Mucosa of descending colon (tissue), 3 donors: ENCODE measurements at regions of chrX and their contacts with region 1.

Region 1: DNA sequence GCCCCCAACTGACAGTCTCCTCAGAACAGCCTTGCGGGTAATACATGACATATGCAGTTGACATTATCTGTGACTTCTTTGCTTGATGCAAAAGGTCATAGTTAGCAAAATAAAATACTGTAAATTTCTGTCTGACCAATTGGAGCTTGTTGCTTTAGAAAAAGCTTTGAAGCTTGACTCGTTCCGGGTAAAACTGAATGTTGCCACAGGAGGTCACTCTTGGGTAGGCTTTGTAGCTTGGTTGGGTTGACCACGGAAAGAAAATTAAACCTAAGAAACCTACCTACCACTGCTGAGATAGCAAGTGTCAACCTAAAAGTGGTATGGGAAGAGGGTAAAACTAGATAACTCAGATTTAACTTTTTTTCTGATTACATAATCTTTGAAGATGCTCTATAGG is 23.2 kb downstream of the PRPS2 start:
- DNase-seq: peak in 1 of 3 donors; percentile 68
- ATAC-seq: peak; percentile 62
- H3K4me3 ChIP-seq: no peak overlapping the region
- H3K4me1 ChIP-seq: no peaks in the 10 kb centered on the region
- CTCF ChIP-seq: no peak

Region 2: GRCh38 chrX:12894074-12895030 is 79.9 kb after region 1 on chrX:
- intact Hi-C with region 1: loop called in 1 of 2 experiments (anchors 10 kb)
- DNase-seq: peak in 2 of 3 donors; percentile 53 to 73
- ATAC-seq: peak; percentile 57
- H3K4me3 ChIP-seq: no peak overlapping the region
- H3K4me1 ChIP-seq: no peaks in the 10 kb centered on the region
- CTCF ChIP-seq: no peak

Region 3: GRCh38 chrX:12901486-12901885 is 87.1 kb after region 1 on chrX:
- intact Hi-C with region 1: loop called (anchors 5 to 10 kb)
- DNase-seq: peak; percentile 51 to 75 (median 65)
- ATAC-seq: peak; percentile 75
- H3K4me3 ChIP-seq: no peak overlapping the region
- H3K4me1 ChIP-seq: no peaks in the 10 kb centered on the region
- CTCF ChIP-seq: no peak

Region 4: DNA sequence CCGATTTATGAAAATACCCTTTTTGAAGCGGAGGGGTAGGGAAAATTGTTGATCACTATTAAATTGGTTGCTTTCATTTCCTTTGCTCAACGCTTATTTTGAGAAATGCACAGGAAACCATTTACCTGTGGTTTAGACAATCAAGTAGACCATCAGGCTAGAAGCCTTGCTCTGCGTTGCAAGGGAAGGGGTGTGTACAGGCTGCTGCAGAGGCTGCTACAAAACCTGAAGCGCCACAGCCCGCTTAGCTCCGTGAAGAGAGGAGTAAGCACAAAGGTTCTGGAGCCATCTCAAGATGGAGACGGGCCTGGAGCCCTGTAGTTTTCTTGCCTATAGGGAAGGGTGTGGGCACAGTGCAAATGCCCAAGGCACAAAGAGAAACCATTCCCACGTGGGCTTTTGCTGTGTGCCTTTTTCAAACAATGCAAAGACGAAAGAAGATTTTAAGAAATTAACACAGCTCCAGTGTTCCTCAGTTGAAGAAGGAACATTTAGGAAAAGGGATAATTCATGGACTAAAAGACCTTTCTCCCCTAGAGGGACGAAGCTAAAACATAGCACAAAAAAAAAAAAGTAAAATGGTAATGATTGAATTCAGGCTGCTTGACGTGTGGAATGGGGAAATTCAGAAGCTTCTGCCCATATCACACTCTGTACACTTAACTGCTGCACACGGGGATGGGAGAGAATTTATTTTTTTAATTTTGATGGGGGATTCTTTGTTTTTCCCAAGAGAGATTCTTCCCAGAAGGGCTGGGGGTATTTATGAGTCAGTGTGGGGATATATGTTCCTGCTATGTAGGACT is 164.0 kb after region 1 on chrX:
- intact Hi-C with region 1: no loop called
- DNase-seq: peak; percentile 63 to 85 (median 68)
- ATAC-seq: peak; percentile 52
- H3K4me3 ChIP-seq: no peak overlapping the region
- H3K4me1 ChIP-seq: no peaks in the 10 kb centered on the region
- CTCF ChIP-seq: no peak